Transverse colon (tissue), 4 donors: ENCODE measurements at regions of chr19 and their contacts with region 1.

Region 1: GRCh38 chr19:52748336-52748950 is 13.6 kb upstream of the ZNF611 start:
- DNase-seq: no peak
- H3K4me3 ChIP-seq: no peak overlapping the region
- H3K27ac ChIP-seq: no peak overlapping the region
- H3K4me1 ChIP-seq: peaks cover 0 to 5% (median 2%) of the 10 kb centered on the region in 4 donors
- H3K27me3 ChIP-seq: no peaks in the 10 kb centered on the region
- CTCF ChIP-seq: peak; percentile 25 to 55 (median 45)
- EP300 ChIP-seq: no peak
- POLR2A ChIP-seq: no peak

Region 2: DNA sequence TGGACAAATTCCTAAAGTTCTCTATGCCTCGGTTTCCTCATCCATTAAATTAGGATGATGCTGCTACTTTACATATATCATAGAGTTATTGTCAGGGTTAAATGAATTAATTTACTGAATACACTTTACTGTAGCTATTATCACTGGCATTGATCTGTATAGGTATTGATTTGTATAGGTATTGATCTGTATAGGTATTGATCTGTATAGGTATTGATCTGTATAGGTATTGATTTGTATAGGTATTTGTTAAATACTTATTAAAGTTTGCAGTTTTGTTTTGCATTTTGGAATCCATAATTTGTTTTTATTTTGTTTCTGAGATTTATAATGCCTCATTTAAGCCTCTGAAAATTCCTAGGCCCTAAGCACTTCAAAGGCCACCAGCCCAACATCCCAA is 561.0 kb before region 1 on chr19:
- in situ Hi-C with region 1: no loop called
- intact Hi-C with region 1: no loop called
- DNase-seq: no peak
- H3K4me3 ChIP-seq: no peak overlapping the region
- H3K27ac ChIP-seq: no peak overlapping the region
- H3K4me1 ChIP-seq: peaks cover 21 to 27% (median 23%) of the 10 kb centered on the region in 4 donors
- H3K27me3 ChIP-seq: no peaks in the 10 kb centered on the region
- CTCF ChIP-seq: no peak
- EP300 ChIP-seq: no peak
- POLR2A ChIP-seq: no peak

Region 3: DNA sequence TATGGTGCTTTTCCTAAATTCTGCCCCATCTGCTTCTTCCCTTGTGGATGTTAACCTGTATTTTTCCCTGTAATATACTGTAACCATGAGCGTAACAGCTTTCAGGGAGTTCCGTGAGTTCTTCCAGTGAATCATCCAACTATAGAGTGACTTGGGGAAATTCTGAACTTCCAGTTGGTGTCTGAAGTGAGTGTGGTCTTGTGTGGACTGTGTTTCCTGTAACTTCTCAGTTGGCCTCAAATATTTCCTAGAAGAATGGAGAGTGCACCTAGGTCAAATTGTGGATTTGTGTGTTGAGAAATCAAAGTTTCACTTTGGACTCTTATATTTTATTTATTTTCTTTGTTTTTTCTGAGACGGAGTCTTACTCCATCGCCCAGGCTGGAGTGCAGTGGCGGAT is 490.0 kb before region 1 on chr19:
- in situ Hi-C with region 1: loop called in 3 of 4 experiments (anchors 10 to 25 kb)
- intact Hi-C with region 1: no loop called
- DNase-seq: no peak
- H3K4me3 ChIP-seq: no peak overlapping the region
- H3K27ac ChIP-seq: no peak overlapping the region
- H3K4me1 ChIP-seq: no peaks in the 10 kb centered on the region
- H3K27me3 ChIP-seq: no peaks in the 10 kb centered on the region
- CTCF ChIP-seq: no peak
- EP300 ChIP-seq: no peak
- POLR2A ChIP-seq: no peak

Region 4: GRCh38 chr19:54335164-54335563 is 1586.7 kb after region 1 on chr19:
- in situ Hi-C with region 1: no loop called
- intact Hi-C with region 1: no loop called
- DNase-seq: no peak
- H3K4me3 ChIP-seq: no peak overlapping the region
- H3K27ac ChIP-seq: no peak overlapping the region
- H3K4me1 ChIP-seq: no peaks in the 10 kb centered on the region
- H3K27me3 ChIP-seq: no peaks in the 10 kb centered on the region
- CTCF ChIP-seq: no peak
- EP300 ChIP-seq: no peak
- POLR2A ChIP-seq: no peak